ENCODE measurements at regions of chr2 and their contacts with region 1.

Region 1: GRCh38 chr2:20015472-20016083 is 3.1 kb upstream of the MATN3 start:
- DNase-seq: peak; percentile 68
- H3K4me3 Mint-ChIP-seq: no peak overlapping the region
- H3K27ac Mint-ChIP-seq: no peak overlapping the region
- H3K4me1 Mint-ChIP-seq: no peaks in the 10 kb centered on the region
- H3K27me3 Mint-ChIP-seq: no peaks in the 10 kb centered on the region
- CTCF ChIP-seq: peak; percentile 43

Region 2: DNA sequence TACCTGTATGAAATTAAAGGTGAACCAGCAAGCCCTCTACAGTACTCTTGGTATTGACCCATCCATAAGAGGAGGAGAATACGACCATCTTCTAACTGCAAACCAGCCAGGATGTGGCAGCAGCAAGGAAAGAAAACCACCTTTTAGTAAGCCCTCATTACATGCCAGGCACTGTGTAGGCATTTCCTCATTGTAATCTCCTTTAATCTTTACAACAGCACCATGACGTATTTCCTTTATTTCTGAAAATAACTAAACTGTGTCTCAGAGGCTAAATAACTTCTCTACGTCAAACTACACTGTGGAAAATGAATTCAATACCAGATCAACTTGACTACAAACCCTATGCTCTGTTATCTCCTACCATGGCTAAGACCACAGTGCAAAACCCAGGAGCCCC is 43.9 kb before region 1 on chr2:
- CTCF ChIA-PET with region 1: interaction called, 18 read pairs
- POLR2A ChIA-PET with region 1: no interaction called
- intact Hi-C with region 1: no loop called
- DNase-seq: no peak
- H3K4me3 Mint-ChIP-seq: no peak overlapping the region
- H3K27ac Mint-ChIP-seq: no peak overlapping the region
- H3K4me1 Mint-ChIP-seq: no peaks in the 10 kb centered on the region
- H3K27me3 Mint-ChIP-seq: no peaks in the 10 kb centered on the region
- CTCF ChIP-seq: no peak

Region 3: DNA sequence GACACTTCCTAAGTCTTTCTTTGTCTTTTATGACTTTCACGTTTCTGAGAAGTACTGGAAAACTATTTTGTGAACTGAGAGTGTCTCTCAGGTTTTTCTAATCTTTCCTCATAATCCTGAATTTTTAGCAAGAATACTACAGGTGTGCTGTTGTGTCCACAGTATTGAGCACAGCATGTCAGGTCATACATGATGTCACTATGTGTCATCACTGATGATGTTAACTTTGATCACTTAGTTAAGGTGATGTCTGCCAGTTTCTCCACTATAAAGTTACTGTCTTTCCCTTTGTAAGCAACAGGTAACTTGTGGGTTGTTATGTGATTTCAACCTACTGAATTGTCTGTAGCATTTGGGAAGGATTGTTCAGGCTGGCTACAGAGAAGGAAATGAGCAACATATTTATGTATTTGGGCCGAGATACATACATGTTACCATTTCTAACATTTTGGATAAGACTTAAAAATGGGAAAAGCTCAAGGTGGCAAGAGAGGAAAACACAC is 14.2 kb before region 1 on chr2:
- CTCF ChIA-PET with region 1: interaction called, 36 read pairs
- POLR2A ChIA-PET with region 1: interaction called, 4 read pairs
- intact Hi-C with region 1: no loop called
- DNase-seq: no peak
- H3K4me3 Mint-ChIP-seq: no peak overlapping the region
- H3K27ac Mint-ChIP-seq: no peak overlapping the region
- H3K4me1 Mint-ChIP-seq: no peaks in the 10 kb centered on the region
- H3K27me3 Mint-ChIP-seq: no peaks in the 10 kb centered on the region
- CTCF ChIP-seq: no peak

Region 4: GRCh38 chr2:20040489-20041172 is 25.1 kb after region 1 on chr2:
- CTCF ChIA-PET with region 1: interaction called, 44 read pairs
- POLR2A ChIA-PET with region 1: interaction called, 6 read pairs
- intact Hi-C with region 1: no loop called
- DNase-seq: peak; percentile 47
- H3K4me3 Mint-ChIP-seq: no peak overlapping the region
- H3K27ac Mint-ChIP-seq: peak overlapping the region; percentile 47
- H3K4me1 Mint-ChIP-seq: peaks cover 20% of the 10 kb centered on the region
- H3K27me3 Mint-ChIP-seq: no peaks in the 10 kb centered on the region
- CTCF ChIP-seq: no peak

Region 5: GRCh38 chr2:20080839-20081415 is 65.3 kb after region 1 on chr2:
- CTCF ChIA-PET with region 1: interaction called, 17 read pairs
- POLR2A ChIA-PET with region 1: no interaction called
- intact Hi-C with region 1: no loop called
- DNase-seq: no peak
- H3K4me3 Mint-ChIP-seq: no peak overlapping the region
- H3K27ac Mint-ChIP-seq: no peak overlapping the region
- H3K4me1 Mint-ChIP-seq: no peaks in the 10 kb centered on the region
- H3K27me3 Mint-ChIP-seq: no peaks in the 10 kb centered on the region
- CTCF ChIP-seq: no peak

Region 6: GRCh38 chr2:20291106-20291564 is 275.6 kb after region 1 on chr2:
- CTCF ChIA-PET with region 1: interaction called, 13 read pairs
- POLR2A ChIA-PET with region 1: no interaction called
- intact Hi-C with region 1: no loop called
- DNase-seq: peak; percentile 88
- H3K4me3 Mint-ChIP-seq: no peak overlapping the region
- H3K27ac Mint-ChIP-seq: peak overlapping the region; percentile 9
- H3K4me1 Mint-ChIP-seq: peaks cover 6% of the 10 kb centered on the region
- H3K27me3 Mint-ChIP-seq: no peaks in the 10 kb centered on the region
- CTCF ChIP-seq: peak; percentile 64